A549 (cell line): ENCODE measurements at regions of chr17 and their contacts with region 1.

Region 1: DNA sequence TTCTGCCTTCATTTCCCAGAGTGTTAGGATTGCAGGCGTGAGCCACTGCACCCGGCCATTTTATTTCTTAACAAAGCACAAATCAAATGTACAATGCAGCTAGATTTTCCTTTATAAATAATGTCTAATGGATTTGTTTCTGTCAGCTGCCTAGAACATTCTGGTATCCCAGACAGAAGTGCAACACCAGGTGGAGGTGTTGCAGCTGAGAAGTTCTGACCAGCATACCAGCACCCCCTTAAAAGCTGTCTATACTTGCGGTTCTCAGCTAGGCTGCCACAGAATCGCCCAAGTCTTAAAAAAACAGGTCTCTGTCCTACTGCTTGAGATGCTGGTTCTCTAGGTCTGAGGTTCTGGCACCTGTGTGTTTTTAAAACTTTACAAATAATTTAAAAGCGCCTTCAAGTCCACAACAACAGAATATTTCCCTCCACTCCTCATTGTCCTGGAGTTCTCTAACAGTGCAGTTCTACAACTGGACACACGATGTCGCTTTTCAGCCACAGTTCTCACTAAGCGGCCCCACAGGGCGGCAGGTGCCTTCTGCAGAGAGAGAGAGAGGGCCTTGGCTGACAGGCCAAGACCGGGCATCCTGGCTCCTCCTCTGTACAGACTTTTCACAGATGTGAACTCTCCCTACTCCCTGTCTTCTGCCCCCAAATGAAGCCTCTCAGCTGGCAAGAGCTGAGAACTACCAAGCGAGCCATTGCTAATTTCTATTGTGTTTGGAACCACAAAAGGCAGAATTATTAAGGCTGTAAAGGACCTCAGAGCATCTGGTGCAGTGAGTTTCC is 32.6 kb upstream of the MEOX1 start:
- DNase-seq: peak; percentile 80 to 90
- ATAC-seq: peak; percentile 83 to 94
- H3K4me3 ChIP-seq: no peak overlapping the region
- H3K27ac ChIP-seq: 0 out of 6 replicates have a peak overlapping the region, but pooled peaks of 1 of the 2 experiments have one; percentile 33
- H3K4me1 ChIP-seq: peaks cover 14% of the 10 kb centered on the region
- CTCF ChIP-seq: peak; percentile 100
- EP300 ChIP-seq: no peak
- POLR2A ChIP-seq: no peak
- RAD21 ChIP-seq: peak; percentile 100

Region 2: DNA sequence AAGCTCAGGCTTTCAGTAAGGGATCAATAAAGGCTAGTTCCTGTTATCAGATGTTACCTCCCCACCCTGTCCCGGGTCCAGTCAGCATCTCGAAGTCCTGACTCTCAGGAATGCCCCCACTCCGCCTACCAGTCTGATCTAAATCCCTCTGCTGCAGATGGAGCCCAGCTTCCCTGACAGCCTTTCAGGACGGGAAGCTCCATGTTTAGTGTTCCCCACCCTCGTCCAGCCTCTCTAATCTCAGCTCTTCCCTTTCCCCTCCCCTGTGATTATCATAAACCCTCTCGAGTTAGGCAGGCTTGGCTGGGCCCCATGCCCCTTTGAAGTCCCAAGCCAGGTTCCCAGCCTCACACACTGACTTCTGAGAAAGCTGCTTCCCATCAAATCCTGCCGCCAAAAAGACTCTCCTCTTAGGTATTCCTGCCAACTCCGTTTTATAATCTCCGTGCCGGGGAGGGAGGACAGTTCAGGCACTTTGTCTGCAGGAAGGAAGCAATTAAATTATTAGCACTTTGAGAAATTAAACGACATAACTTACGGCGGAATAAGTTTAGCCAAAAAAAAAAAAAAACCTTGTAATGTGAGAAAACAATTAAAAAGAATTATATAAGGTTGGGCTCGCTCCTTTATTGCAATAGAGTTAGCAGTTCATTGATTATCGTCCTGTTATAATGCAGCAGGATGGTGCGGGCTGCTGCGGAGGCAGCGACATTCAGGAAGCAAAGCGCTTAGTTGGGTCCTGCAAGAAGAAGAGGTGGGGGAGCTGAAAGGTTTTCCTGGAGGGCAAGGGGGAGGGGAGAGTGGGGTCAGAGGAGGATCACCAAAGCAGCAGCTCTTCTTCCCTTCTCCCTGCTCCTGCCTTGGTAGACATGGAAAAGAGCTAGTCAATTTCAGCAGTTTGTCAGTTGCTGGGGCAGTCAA is 131.3 kb before region 1 on chr17:
- CTCF ChIA-PET with region 1: interaction called, 257 read pairs
- POLR2A ChIA-PET with region 1: no interaction called
- DNase-seq: no peak
- ATAC-seq: no peak
- H3K4me3 ChIP-seq: no peak overlapping the region
- H3K27ac ChIP-seq: no peak overlapping the region; a peak in 1 of 6 replicates
- H3K4me1 ChIP-seq: 0 out of 3 replicates have a peak, but pooled peaks cover 3% of the 10 kb centered on the region
- CTCF ChIP-seq: no peak
- EP300 ChIP-seq: no peak
- POLR2A ChIP-seq: no peak
- RAD21 ChIP-seq: no peak

Region 3: DNA sequence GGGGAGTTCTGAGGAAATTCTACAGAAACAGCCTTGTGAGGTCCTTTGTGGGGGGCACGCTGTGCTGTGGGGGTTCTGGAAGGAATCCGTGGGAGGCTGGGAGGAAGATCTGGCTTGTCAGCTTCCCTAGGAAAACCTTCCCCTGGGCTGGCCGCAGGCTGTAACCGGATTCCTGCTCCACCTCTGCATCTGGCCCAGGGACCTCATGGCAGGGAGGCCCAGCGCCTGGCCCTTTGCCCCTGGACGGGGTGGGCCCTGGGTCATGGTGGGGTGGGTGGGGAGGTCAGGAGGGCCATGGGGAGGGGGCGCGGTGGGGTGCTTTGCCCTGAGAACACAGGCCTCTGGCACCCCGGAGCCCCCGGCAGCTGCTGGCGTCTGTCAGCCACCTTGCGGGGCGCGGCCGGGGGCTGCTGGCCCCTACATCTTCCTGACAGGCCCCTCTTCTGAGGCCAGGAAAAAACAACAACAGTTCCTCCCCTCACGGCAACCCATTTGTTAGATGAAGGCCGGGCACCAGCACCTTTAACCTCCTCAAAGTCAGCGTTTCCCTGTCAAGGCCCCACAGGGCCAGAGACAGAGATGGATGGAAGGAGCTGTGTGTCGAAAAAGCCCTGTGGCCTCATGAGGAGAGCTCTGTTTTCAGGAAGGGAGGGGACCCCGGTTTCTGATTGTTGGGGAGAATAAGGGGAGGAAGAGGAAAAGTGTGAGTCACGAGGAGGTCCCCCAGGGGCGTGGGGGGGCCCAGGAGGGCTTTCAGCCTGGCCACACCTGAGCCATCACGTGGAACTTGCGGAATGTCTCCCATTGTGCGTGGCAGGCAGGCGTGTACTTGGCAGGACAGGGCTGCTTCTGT is 29.0 kb before region 1 on chr17:
- CTCF ChIA-PET with region 1: interaction called, 11 read pairs
- POLR2A ChIA-PET with region 1: no interaction called
- DNase-seq: no peak
- ATAC-seq: peak in 1 of 2 experiments; percentile 16; a peak in 1 of 6 replicates
- H3K4me3 ChIP-seq: no peak overlapping the region
- H3K27ac ChIP-seq: no peak overlapping the region; a peak in 1 of 6 replicates
- H3K4me1 ChIP-seq: no peaks in the 10 kb centered on the region
- CTCF ChIP-seq: no peak
- EP300 ChIP-seq: no peak
- POLR2A ChIP-seq: no peak
- RAD21 ChIP-seq: no peak

Region 4: GRCh38 chr17:43772877-43773648 is 78.8 kb after region 1 on chr17:
- CTCF ChIA-PET with region 1: interaction called, 28 read pairs
- POLR2A ChIA-PET with region 1: no interaction called
- DNase-seq: no peak
- ATAC-seq: no peak
- H3K4me3 ChIP-seq: no peak overlapping the region
- H3K27ac ChIP-seq: no peak overlapping the region
- H3K4me1 ChIP-seq: peaks cover 28% of the 10 kb centered on the region
- CTCF ChIP-seq: no peak
- EP300 ChIP-seq: no peak
- POLR2A ChIP-seq: no peak
- RAD21 ChIP-seq: no peak